Testis (tissue), 5 donors: ENCODE measurements at regions of chr19 and their contacts with region 1.

Region 1: DNA sequence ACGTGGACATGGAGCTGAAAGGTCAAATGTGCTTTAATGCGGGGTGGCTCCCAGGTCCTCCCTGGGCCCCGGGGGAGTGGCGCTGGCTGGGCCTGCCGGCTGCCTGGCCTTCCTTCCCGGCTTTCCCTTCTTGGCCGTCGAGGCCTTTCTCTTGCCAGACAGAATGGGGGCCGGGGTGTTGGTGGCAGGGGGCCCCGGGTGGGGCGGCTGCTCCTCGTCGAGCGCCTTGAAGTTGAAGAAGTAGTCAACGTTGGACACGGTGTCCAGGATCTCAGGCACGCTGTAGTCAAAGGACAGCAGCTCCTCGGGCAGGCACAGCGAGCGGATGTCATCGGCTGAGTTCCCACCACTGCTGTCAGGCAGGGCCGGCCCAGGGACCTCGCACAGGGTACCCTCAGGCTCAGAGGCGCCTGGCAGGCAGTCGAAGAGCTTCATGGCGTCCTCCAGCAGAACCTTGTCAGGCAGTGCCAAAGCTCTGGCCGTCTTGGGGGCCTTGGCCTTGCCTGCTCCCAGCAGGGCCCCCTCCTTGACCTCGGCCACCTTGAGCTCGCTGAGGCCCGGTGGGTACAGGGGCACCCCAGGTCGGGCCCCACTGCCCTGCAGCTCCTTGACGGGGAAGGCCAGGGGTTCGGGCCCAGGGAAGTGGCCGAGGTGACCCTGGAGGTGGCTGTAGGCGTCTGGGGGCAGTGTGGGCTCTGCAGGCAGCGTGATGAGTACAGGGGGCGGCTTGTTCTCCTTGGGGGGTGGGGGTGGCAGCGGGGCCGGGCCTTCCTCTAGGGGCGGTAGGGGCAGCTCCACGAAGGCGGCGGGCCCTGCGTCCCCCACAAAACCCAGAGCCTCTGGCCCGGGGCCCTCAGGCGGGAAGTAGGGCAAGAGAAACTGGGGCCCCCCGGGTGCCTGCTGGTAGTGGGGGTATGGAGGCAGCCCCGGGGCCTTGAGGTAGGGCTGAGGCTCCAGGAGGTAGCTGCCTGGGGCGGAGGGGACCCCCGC is 1.3 kb downstream of the PRR22 start:
- DNase-seq: no peak
- H3K4me3 ChIP-seq: no peak overlapping the region
- H3K27ac ChIP-seq: no peak overlapping the region
- H3K4me1 ChIP-seq: no peaks in the 10 kb centered on the region
- H3K27me3 ChIP-seq: no peaks in the 10 kb centered on the region
- CTCF ChIP-seq: no peak
- POLR2A ChIP-seq: no peak

Region 2: DNA sequence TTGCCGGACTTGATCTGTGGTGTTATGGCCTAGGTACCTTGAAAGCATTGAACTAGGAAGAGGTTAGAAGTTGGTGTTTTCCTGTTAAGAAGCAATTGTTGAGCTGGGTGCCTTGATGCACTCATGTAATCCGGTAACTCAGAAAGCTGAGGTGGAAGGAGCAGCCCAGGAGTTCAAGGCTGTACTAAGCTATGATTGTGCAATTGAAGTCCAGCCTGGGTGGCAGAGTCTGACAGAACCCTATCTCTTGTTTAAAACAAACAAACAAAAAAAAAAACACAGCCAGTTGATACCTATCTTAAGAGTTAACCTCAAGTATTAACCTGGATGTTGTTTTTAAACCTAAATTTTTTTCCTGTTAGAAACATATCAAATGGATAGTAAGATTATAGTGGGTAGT is 141.0 kb before region 1 on chr19:
- intact Hi-C with region 1: no loop called
- DNase-seq: no peak
- H3K4me3 ChIP-seq: no peak overlapping the region
- H3K27ac ChIP-seq: no peak overlapping the region
- H3K4me1 ChIP-seq: no peaks in the 10 kb centered on the region
- H3K27me3 ChIP-seq: no peaks in the 10 kb centered on the region
- CTCF ChIP-seq: no peak
- POLR2A ChIP-seq: no peak

Region 3: GRCh38 chr19:5904352-5905113 is 121.3 kb after region 1 on chr19 and contains the start of gene VMAC:
- intact Hi-C with region 1: loop called (anchors 10 kb)
- DNase-seq: peak; percentile 100
- H3K4me3 ChIP-seq: peak within 1 kb of the TSS; percentile 95 to 97
- H3K27ac ChIP-seq: peak within 1 kb of the TSS; percentile 73 to 89
- H3K4me1 ChIP-seq: peaks cover 15% of the 10 kb centered on the region
- H3K27me3 ChIP-seq: no peaks in the 10 kb centered on the region
- CTCF ChIP-seq: no peak
- POLR2A ChIP-seq: no peak
- total RNA-seq, gene VMAC: 7.4 to 7.7 TPM